ENCODE measurements at regions of chr16 and their contacts with region 1.

Region 1: DNA sequence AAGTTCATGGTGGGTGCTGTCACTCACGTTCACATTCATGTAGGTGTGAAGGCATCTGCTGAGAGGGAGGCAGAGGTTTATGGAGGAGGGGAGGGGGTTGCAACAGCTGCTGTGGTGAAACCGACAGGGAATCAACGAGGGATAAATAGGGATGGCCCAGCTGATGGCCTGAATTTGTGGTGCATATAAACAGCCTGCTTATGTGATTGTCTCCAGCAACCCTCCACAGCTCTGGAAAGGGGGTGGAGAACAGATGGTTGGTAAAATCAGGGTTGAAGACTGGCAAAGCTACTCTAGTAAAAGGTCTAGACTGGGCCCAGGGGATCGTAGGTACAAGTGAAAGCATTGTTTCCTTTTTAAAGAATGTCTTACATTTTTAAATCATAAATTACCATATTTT is 53.7 kb downstream of the IQCK start:
- DNase-seq: no peak
- ATAC-seq: no peak
- H3K4me3 ChIP-seq: no peak overlapping the region
- H3K27ac ChIP-seq: no peak overlapping the region
- H3K4me1 ChIP-seq: peaks cover 0 to 11% (median 1%) of the 10 kb centered on the region in 9 donors
- H3K27me3 ChIP-seq: no peaks in the 10 kb centered on the region
- CTCF ChIP-seq: no peak

Region 2: DNA sequence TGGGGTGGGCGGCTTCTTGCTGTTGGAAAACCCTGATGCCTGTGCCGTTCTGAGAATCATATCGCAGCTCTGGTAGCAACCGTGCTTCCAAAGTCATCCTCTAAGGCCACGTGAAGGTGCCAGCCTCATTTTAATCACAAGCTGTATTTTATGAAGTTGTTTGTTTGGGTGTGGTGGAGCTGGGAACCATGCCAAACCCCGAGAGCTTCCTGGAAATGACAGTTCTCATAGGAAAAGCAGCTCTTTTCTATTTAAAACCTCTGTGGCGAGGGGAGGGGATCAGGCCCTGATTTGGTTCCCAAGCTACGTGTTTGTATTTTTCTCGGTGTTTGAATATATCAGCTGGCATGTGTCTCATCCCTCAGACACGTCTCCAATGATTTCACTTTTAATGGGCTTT is 75.5 kb before region 1 on chr16:
- intact Hi-C with region 1: no loop called
- DNase-seq: peak; percentile 71 to 92
- ATAC-seq: peak; percentile 56 to 78 (median 68)
- H3K4me3 ChIP-seq: peak overlapping the region in 1 of 10 donors; percentile 7
- H3K27ac ChIP-seq: peak overlapping the region; percentile 69 to 93 (median 84)
- H3K4me1 ChIP-seq: peaks cover 8 to 64% (median 55%) of the 10 kb centered on the region in 9 donors
- H3K27me3 ChIP-seq: no peaks in the 10 kb centered on the region
- CTCF ChIP-seq: no peak

Region 3: DNA sequence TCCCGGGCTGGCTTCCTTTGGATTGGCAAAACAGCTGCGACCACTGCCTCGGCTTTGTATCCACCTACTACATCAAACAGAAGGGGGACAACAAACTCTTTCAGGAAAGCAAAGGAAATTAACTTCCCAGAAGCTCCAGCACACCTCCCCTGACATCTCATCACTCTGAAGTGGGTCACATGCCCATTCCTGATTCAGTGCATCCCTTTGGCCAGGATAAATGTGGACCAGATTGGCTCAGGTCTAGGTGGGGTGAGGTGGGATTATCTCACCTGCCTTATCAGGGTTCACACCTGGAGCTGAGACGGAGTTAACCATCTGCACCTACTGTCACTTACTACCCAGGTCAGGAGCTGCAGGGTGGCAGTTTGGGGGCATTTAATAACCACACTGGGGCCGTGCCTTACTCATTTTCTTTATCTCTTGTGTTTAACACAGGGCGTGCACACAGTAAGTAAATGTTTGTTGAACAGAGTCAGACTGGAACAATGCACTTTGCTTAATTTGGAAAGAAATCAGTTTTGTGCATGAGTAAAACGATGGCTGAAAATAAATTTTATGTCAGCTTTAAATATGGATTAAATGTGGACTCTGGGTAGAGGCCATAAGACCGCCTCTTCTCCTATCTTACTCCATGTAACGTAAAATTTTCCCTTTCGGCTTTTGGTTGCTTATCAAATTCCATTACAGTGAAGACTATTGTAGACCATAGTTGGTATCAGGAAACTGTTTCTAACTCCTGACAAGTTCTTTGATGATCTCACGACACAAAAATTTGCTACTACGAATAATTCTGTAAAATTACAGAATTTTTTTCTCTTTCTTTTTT is 17.8 kb before region 1 on chr16:
- intact Hi-C with region 1: no loop called
- DNase-seq: no peak
- ATAC-seq: peak in 7 of 8 donors; percentile 56 to 87 (median 69)
- H3K4me3 ChIP-seq: no peak overlapping the region
- H3K27ac ChIP-seq: peak overlapping the region; percentile 8 to 88 (median 80)
- H3K4me1 ChIP-seq: peaks cover 0 to 83% (median 34%) of the 10 kb centered on the region in 9 donors
- H3K27me3 ChIP-seq: no peaks in the 10 kb centered on the region
- CTCF ChIP-seq: no peak

Region 4: GRCh38 chr16:19810817-19811731 is 39.3 kb after region 1 on chr16:
- intact Hi-C with region 1: loop called in 1 of 10 experiments (anchors 5 kb)
- DNase-seq: no peak
- ATAC-seq: peak in 4 of 8 donors; percentile 16 to 64 (median 28)
- H3K4me3 ChIP-seq: no peak overlapping the region
- H3K27ac ChIP-seq: peak overlapping the region in 6 of 10 donors; percentile 13 to 64 (median 42)
- H3K4me1 ChIP-seq: peaks cover 0 to 47% (median 28%) of the 10 kb centered on the region in 9 donors
- H3K27me3 ChIP-seq: no peaks in the 10 kb centered on the region
- CTCF ChIP-seq: no peak

Measured in heart right ventricle (tissue), 16 donors.